Heart left ventricle (tissue), 16 donors: ENCODE measurements at regions of chr12 and their contacts with region 1.

Region 1: GRCh38 chr12:44930972-44931600 is 55.0 kb upstream of the NELL2 start:
- DNase-seq: no peak
- ATAC-seq: no peak
- H3K4me3 ChIP-seq: no peak overlapping the region
- H3K27ac ChIP-seq: no peak overlapping the region
- H3K4me1 ChIP-seq: peaks cover 0 to 4% (median 0%) of the 10 kb centered on the region in 12 donors
- H3K27me3 ChIP-seq: no peaks in the 10 kb centered on the region
- CTCF ChIP-seq: peak; percentile 49 to 77 (median 67)
- POLR2A ChIP-seq: no peak

Region 2: GRCh38 chr12:43942379-43942778 is 988.7 kb before region 1 on chr12:
- intact Hi-C with region 1: loop called in 1 of 10 experiments (anchors 10 kb)
- DNase-seq: no peak
- ATAC-seq: no peak
- H3K4me3 ChIP-seq: no peak overlapping the region
- H3K27ac ChIP-seq: no peak overlapping the region
- H3K4me1 ChIP-seq: no peaks in the 10 kb centered on the region
- H3K27me3 ChIP-seq: no peaks in the 10 kb centered on the region
- CTCF ChIP-seq: no peak
- POLR2A ChIP-seq: no peak

Region 3: GRCh38 chr12:43957732-43958372 is 973.2 kb before region 1 on chr12:
- intact Hi-C with region 1: loop called in 8 of 10 experiments (anchors 2 to 10 kb)
- DNase-seq: peak in 1 of 5 donors; percentile 10
- ATAC-seq: peak in 3 of 4 donors; percentile 57 to 72 (median 71)
- H3K4me3 ChIP-seq: no peak overlapping the region
- H3K27ac ChIP-seq: no peak overlapping the region
- H3K4me1 ChIP-seq: peaks cover 0 to 8% (median 0%) of the 10 kb centered on the region in 12 donors
- H3K27me3 ChIP-seq: no peaks in the 10 kb centered on the region
- CTCF ChIP-seq: peak; percentile 12 to 62 (median 48)
- POLR2A ChIP-seq: no peak

Region 4: DNA sequence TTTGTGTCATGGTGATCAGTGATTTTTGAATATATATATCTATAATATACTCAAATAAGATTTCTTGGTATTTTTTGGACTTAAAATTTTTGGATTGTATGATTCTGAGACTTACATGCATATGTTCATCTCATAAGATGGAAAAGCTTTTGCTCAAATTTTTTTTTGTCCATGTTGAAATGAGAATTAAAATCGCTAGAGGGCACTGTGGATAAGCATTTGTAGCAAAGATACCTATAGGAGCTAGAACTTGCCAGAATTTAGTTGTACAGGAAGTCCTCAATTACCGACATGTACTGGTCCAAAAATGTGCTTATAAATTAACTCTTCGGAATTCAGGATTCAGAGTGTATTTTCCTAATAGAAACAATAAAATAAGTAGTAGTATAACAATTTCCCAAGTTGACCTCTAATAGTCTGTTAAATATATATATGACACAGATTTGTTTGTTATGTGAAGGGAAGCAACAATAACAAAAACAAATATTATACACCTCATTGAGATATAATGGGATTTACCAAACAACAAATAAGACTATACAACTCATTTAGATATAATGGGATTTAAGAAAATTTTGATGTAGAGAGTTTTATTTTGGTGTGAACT is 915.6 kb before region 1 on chr12:
- intact Hi-C with region 1: loop called (anchors 1 to 5 kb)
- DNase-seq: no peak
- ATAC-seq: peak in 2 of 4 donors; percentile 53 to 61
- H3K4me3 ChIP-seq: no peak overlapping the region
- H3K27ac ChIP-seq: no peak overlapping the region
- H3K4me1 ChIP-seq: peaks cover 0 to 9% (median 2%) of the 10 kb centered on the region in 12 donors
- H3K27me3 ChIP-seq: no peaks in the 10 kb centered on the region
- CTCF ChIP-seq: peak; percentile 50 to 75 (median 62)
- POLR2A ChIP-seq: no peak

Region 5: DNA sequence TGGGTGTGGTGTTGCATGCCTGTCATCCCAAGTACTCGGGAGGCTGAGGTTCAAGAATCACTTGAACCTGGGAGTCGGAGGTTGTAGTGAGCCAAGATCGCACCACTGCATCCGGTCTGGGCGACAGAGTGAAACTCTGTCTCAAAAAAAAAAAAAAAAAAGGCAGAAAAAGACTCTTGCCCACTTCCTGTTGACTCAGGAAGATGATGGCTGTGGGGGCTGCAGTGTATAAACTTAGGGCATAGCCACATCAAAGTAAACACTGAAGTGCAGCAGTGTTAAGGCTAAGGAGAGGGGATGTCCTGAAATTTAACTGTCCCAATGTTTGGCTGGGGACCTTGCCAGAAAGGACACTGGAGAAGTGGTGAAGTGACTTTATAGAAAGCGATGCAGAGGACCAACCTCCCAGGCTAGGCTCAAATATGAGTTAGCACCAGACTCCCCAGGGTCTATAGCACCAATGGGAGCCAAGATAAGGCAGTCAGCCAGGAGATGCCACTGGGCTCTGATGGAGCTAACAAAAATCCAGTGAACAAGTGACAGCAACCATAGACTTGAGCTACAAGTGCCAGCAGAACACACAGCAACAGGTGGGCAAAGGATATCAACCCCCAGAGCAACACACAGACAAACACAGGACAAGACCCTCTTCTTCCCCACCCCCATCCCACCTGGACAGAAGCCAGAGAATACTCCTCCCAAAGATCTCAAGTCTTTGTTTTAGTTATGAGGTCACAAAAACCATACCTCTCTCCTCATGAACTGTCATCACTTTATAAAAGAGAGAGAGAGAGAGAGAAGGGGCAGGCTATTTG is 83.0 kb before region 1 on chr12:
- intact Hi-C with region 1: no loop called
- DNase-seq: no peak
- ATAC-seq: no peak
- H3K4me3 ChIP-seq: no peak overlapping the region
- H3K27ac ChIP-seq: peak overlapping the region in 1 of 12 donors; percentile 37
- H3K4me1 ChIP-seq: no peaks in the 10 kb centered on the region
- H3K27me3 ChIP-seq: peaks cover 0 to 3% (median 0%) of the 10 kb centered on the region in 9 donors
- CTCF ChIP-seq: no peak
- POLR2A ChIP-seq: no peak

Region 6: GRCh38 chr12:45034861-45035265 is 103.8 kb after region 1 on chr12:
- intact Hi-C with region 1: no loop called
- DNase-seq: no peak
- ATAC-seq: no peak
- H3K4me3 ChIP-seq: no peak overlapping the region
- H3K27ac ChIP-seq: no peak overlapping the region
- H3K4me1 ChIP-seq: no peaks in the 10 kb centered on the region
- H3K27me3 ChIP-seq: no peaks in the 10 kb centered on the region
- CTCF ChIP-seq: no peak
- POLR2A ChIP-seq: no peak